Panc1 (cell line): ENCODE measurements at regions of chr2 and their contacts with region 1.

Region 1: DNA sequence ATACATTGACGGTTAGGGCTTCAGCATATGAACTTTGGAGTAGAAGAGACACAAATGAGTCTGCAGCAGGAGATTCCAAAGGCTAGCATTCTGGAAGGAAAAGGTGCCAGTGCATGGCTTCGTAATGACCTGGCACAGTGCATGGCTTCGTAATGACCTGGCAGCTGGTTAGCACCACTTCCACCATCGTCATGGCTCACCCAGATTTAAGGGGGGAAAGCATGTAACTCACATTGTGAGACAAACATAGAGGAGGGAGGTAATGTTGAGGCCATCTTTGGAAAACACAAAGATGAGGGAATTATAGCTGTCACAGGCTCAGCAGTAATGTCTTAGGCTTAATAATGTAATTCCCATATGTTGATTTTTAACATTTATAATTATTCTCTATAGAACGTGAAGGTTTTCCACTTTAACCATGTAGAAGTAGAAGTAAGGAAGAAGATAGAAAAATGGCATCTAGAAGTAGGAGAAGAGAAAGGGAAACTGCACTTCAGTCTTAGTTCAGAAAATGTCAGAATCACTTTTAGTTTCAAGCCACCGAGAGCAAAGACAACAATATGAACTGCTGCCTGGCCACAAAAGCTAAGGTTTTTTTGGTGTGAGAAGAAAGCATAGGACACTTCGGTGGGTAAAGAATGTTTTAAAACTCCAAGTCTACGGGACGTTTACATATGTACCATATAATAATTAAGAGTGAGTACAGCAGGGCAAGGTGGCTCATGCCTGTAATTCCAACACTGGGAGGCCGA is 6.8 kb upstream of the STK25 start:
- DNase-seq: no peak
- ATAC-seq: peak; percentile 32
- H3K4me3 ChIP-seq: no peak overlapping the region
- H3K27ac ChIP-seq: 0 out of 2 replicates have a peak overlapping the region, but pooled peaks have one; percentile 12
- H3K4me1 ChIP-seq: no peaks in the 10 kb centered on the region
- H3K27me3 ChIP-seq: no peaks in the 10 kb centered on the region
- CTCF ChIP-seq: no peak

Region 2: GRCh38 chr2:240919786-240920782 is 595.1 kb before region 1 on chr2:
- CTCF ChIA-PET with region 1: no interaction called
- POLR2A ChIA-PET with region 1: interaction called, 20 read pairs
- in situ Hi-C with region 1: no loop called
- intact Hi-C with region 1: no loop called
- DNase-seq: no peak
- ATAC-seq: no peak
- H3K4me3 ChIP-seq: no peak overlapping the region
- H3K27ac ChIP-seq: no peak overlapping the region
- H3K4me1 ChIP-seq: peaks cover 64% of the 10 kb centered on the region
- H3K27me3 ChIP-seq: no peaks in the 10 kb centered on the region
- CTCF ChIP-seq: no peak

Region 3: DNA sequence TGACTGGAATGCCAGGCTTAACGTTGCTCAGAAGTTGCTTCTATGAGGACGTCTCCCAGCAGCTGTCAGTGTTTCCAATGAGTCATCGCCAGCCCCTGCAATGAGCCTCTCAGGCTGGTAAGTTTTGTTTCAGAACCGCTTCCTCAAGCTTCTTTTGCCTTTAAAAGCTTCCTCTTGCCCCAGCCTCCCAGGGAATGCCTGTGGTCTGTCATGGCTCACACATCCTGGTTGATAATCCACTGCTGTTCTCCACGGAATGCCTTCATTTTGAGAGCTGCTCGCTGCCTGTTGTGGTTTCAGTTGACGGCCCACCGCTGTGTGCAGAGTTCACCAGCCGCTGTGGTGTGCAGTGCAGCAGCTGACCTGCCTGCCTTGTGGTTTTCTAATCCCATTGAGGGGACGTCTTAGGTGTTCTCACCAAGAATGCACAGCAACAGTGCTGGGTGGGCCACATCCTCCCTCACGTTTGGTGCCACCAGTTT is 450.8 kb after region 1 on chr2:
- CTCF ChIA-PET with region 1: no interaction called
- POLR2A ChIA-PET with region 1: no interaction called
- in situ Hi-C with region 1: no loop called
- intact Hi-C with region 1: no loop called
- DNase-seq: peak; percentile 22
- ATAC-seq: peak; percentile 93
- H3K4me3 ChIP-seq: peak overlapping the region; percentile 0 to 52; a peak in 3 of 4 replicates
- H3K27ac ChIP-seq: 0 out of 2 replicates have a peak overlapping the region, but pooled peaks have one; percentile 1
- H3K4me1 ChIP-seq: peaks cover 3% of the 10 kb centered on the region
- H3K27me3 ChIP-seq: no peaks in the 10 kb centered on the region
- CTCF ChIP-seq: no peak